Aorta (tissue), 5 donors: ENCODE measurements at regions of chr18 and their contacts with region 1.

Region 1: GRCh38 chr18:36372903-36373311 is 75.4 kb downstream of the FHOD3 start:
- DNase-seq: no peak
- ATAC-seq: no peak
- H3K4me3 ChIP-seq: no peak overlapping the region
- H3K27ac ChIP-seq: peak overlapping the region in 1 of 2 donors; percentile 13
- H3K4me1 ChIP-seq: peaks cover 3 to 5% of the 10 kb centered on the region in 2 donors
- H3K27me3 ChIP-seq: no peaks in the 10 kb centered on the region

Region 2: GRCh38 chr18:36419905-36420531 is 47.1 kb after region 1 on chr18:
- intact Hi-C with region 1: loop called (anchors 5 kb)
- DNase-seq: no peak
- ATAC-seq: peak; percentile 42
- H3K4me3 ChIP-seq: no peak overlapping the region
- H3K27ac ChIP-seq: peak overlapping the region; percentile 9 to 94
- H3K4me1 ChIP-seq: peaks cover 5 to 8% of the 10 kb centered on the region in 2 donors
- H3K27me3 ChIP-seq: no peaks in the 10 kb centered on the region